Naive thymus-derived CD4-positive, alpha-beta T cell (primary cell): ENCODE measurements at regions of chr16 and their contacts with region 1.

Region 1: DNA sequence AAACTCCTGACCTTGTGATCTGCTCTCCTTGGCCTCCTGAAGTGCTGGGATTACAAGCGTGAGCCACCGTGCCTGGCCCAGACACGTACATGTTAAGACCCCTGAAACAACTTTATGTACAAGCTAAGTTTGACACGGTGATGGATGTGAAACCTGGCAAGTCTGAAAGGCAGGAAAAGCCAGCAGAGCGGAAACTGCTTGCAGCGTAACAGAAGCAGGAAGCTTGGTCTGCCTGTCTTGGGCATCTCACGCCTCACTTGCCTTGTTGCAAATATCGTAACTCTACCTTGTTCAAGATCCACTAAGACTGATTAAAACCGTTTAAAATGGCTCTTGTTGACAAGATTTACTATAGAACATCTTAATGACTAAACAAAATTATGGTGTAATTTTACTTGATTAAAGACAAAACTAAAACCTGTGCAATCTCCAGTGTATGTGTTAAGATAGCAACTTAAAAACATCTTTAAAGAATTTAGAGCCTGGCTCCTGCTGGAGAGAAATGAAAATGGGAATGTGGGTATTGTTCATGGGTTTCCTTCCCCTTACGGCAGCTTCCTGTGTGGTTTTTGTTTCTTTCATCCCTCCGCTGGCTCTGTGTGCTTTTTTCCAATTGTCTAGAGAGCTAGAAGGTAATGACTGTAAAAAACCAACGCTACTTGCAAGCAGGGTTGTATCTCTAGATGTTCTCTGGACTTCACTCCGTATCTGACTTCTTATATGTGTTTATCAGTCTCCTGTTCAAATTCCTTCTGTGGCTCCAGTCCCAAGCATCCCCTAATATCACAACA is 477.6 kb downstream of the XYLT1 start:
- DNase-seq: peak in 6 of 9 donors; percentile 13 to 42 (median 33)
- ATAC-seq: peak; percentile 68
- H3K4me3 ChIP-seq: peak overlapping the region; percentile 44
- H3K4me3 Mint-ChIP-seq: peak overlapping the region; percentile 42 to 89 (median 73)
- H3K27ac ChIP-seq: peak overlapping the region; percentile 24
- H3K27ac Mint-ChIP-seq: peak overlapping the region; percentile 50 to 93 (median 82)
- H3K4me1 ChIP-seq: peaks cover 9 to 17% of the 10 kb centered on the region in 2 donors
- H3K4me1 Mint-ChIP-seq: peaks cover 10 to 33% (median 28%) of the 10 kb centered on the region in 7 donors
- H3K27me3 ChIP-seq: no peaks in the 10 kb centered on the region
- H3K27me3 Mint-ChIP-seq: no peaks in the 10 kb centered on the region

Region 2: GRCh38 chr16:16960785-16961184 is 32.4 kb before region 1 on chr16:
- CTCF ChIA-PET with region 1: no interaction called
- POLR2A ChIA-PET with region 1: no interaction called
- intact Hi-C with region 1: no loop called
- DNase-seq: no peak
- ATAC-seq: no peak
- H3K4me3 ChIP-seq: no peak overlapping the region
- H3K4me3 Mint-ChIP-seq: no peak overlapping the region
- H3K27ac ChIP-seq: no peak overlapping the region
- H3K27ac Mint-ChIP-seq: no peak overlapping the region
- H3K4me1 ChIP-seq: no peaks in the 10 kb centered on the region
- H3K4me1 Mint-ChIP-seq: peaks cover 0 to 3% (median 0%) of the 10 kb centered on the region in 7 donors
- H3K27me3 ChIP-seq: peaks cover 0 to 4% of the 10 kb centered on the region in 2 donors
- H3K27me3 Mint-ChIP-seq: peaks cover 0 to 9% (median 8%) of the 10 kb centered on the region in 5 donors

Region 3: GRCh38 chr16:17026600-17027242 is 33.6 kb after region 1 on chr16:
- CTCF ChIA-PET with region 1: no interaction called
- POLR2A ChIA-PET with region 1: interaction called, 4 read pairs
- intact Hi-C with region 1: loop called in 1 of 2 experiments (anchors 5 kb)
- DNase-seq: peak in 8 of 9 donors; percentile 30 to 63 (median 54)
- ATAC-seq: peak; percentile 86
- H3K4me3 ChIP-seq: no peak overlapping the region
- H3K4me3 Mint-ChIP-seq: peak overlapping the region; percentile 48 to 80 (median 70)
- H3K27ac ChIP-seq: peak overlapping the region; percentile 4
- H3K27ac Mint-ChIP-seq: peak overlapping the region in 8 of 9 donors; percentile 45 to 89 (median 73)
- H3K4me1 ChIP-seq: peaks cover 20% of the 10 kb centered on the region in 2 donors
- H3K4me1 Mint-ChIP-seq: peaks cover 14 to 48% (median 40%) of the 10 kb centered on the region in 7 donors
- H3K27me3 ChIP-seq: no peaks in the 10 kb centered on the region
- H3K27me3 Mint-ChIP-seq: peaks cover 0 to 2% (median 0%) of the 10 kb centered on the region in 5 donors

Region 4: GRCh38 chr16:17038415-17038814 is 45.2 kb after region 1 on chr16:
- CTCF ChIA-PET with region 1: no interaction called
- POLR2A ChIA-PET with region 1: no interaction called
- intact Hi-C with region 1: no loop called
- DNase-seq: no peak
- ATAC-seq: no peak
- H3K4me3 ChIP-seq: no peak overlapping the region
- H3K4me3 Mint-ChIP-seq: no peak overlapping the region
- H3K27ac ChIP-seq: no peak overlapping the region
- H3K27ac Mint-ChIP-seq: no peak overlapping the region
- H3K4me1 ChIP-seq: peaks cover 0 to 11% of the 10 kb centered on the region in 2 donors
- H3K4me1 Mint-ChIP-seq: no peaks in the 10 kb centered on the region
- H3K27me3 ChIP-seq: no peaks in the 10 kb centered on the region
- H3K27me3 Mint-ChIP-seq: no peaks in the 10 kb centered on the region

Region 5: DNA sequence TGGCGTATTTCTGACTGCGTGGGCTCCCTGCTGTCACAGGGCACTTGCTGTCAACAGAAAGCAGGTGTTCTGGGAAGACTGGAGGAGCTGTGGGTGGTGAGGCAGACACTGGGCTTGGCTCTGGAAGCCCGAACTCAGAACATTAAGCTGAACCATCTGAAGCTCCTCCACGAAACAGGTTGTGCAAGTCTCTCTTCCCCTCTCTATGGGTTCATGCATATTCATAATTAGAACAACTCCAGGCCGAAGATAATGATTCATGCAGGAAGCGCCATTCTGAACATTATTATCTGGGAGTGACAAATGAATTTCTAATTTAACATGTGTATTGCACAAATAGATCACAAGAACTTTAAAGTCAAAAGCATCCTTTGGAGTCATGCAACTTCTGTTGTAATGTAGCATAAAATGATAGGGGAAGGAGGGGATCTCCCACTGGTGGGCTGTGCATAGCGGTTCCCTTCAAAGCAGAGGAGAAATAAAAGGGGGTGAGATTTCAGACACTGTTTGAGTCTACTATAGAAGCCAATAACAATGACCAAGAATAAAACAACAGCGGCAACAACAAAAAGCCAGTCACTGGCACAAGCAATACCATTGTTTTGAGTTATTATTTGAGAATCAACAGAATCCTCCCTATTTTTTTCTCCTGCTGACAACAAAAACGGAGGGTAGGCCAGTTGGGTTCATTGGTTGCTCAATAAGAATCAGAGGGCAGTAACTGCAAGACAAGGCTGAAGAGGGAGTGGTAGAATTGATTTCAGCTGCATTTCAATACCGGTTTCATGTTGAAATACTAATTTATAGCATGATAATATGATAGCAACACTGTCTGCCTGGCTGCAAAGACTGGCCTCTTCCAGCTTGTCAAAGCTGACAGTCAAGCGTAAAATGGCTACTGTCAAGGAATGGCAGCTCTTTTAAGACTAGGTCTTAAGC is 70.3 kb after region 1 on chr16:
- CTCF ChIA-PET with region 1: no interaction called
- POLR2A ChIA-PET with region 1: no interaction called
- intact Hi-C with region 1: no loop called
- DNase-seq: no peak
- ATAC-seq: peak; percentile 80
- H3K4me3 ChIP-seq: no peak overlapping the region
- H3K4me3 Mint-ChIP-seq: no peak overlapping the region
- H3K27ac ChIP-seq: no peak overlapping the region
- H3K27ac Mint-ChIP-seq: peak overlapping the region in 1 of 9 donors; percentile 22
- H3K4me1 ChIP-seq: no peaks in the 10 kb centered on the region
- H3K4me1 Mint-ChIP-seq: peaks cover 0 to 15% (median 0%) of the 10 kb centered on the region in 7 donors
- H3K27me3 ChIP-seq: no peaks in the 10 kb centered on the region
- H3K27me3 Mint-ChIP-seq: peaks cover 0 to 2% (median 0%) of the 10 kb centered on the region in 5 donors